ENCODE measurements at regions of chr3 and their contacts with region 1.

Region 1: DNA sequence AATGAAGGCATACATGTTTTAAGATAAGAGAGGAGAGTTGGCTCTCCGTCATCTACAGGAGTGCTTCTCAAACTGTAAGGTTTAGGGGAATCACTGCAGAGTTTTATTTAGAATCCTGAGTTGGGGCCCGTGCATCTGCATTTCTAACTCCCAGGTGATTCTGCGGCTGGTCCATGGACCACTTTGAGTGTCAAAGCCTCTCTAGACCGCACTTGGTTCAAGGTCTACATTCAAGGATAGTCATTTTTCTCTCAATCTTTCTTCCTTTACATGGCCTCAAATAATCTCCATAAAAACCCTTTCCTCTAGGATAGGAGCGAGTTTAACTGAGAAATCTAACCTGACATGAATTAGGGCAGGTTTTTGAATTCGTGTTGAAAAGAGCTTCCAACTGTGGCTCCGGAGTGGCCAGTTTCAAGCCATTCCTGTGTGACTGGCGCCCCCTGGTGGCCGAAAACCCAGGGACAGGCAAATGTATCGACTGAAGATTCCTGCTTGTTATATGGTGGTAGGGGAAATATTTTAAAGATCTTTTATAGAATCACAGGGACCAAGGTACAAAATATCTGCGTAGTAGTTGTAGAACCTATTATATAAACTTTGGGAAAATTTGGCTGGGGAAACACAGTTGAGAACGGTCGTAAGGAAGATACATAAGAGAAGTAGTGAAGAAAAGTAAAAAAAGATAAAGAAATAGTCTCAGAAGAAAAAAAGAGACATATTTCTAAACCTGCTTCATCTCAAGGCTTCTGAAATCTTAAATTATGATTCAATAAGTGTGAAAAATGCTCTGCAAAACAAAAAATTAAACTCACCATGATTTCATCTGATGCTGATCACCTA is 11.9 kb downstream of the GABRR3 start:
- DNase-seq: peak; percentile 88 to 99 (median 92)
- H3K4me3 ChIP-seq: peak overlapping the region in 1 of 59 donors; percentile 7
- H3K27ac ChIP-seq: no peak overlapping the region
- H3K27me3 ChIP-seq: peaks cover 0 to 4% (median 0%) of the 10 kb centered on the region in 45 donors
- CTCF ChIP-seq: peak in 55 of 56 donors; percentile 95 to 100 (median 99)

Region 2: DNA sequence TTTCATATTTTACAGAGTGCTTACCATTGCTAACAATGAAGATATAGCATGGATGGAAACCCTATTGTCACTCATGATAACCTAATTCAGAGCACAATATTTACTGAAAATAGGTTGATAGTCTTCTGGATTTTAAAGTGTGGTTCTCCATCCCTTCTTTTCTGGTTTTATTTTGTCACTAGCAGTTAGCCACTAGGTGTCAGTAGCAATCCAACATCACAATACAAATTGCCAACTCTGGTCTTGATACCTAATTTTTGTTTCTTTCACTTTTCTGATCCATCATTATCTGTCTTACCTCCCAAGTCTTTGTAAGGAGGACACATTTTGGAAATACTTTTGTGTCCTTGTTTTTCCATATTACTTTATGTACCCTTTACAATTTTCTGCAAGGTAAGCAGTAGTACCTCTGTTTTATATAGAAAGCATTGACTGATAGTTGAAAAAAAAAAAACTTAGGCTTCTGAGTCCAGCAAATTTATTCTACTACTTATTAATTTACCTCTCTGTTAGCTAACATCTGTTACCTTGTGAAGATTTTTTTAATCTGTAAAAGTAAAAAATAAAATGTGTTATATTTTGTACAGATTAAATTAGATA is 229.7 kb before region 1 on chr3:
- intact Hi-C with region 1: loop called (anchors 1 to 2 kb)
- DNase-seq: no peak
- H3K4me3 ChIP-seq: no peak overlapping the region
- H3K27ac ChIP-seq: no peak overlapping the region
- H3K27me3 ChIP-seq: no peaks in the 10 kb centered on the region
- CTCF ChIP-seq: peak; percentile 74 to 99 (median 86)

Region 3: GRCh38 chr3:97971677-97972567 is 51.3 kb before region 1 on chr3 and contains the start of gene RIOX2:
- intact Hi-C with region 1: loop called in 1 of 2 experiments (anchors 2 kb)
- DNase-seq: peak; percentile 56 to 83 (median 74)
- H3K4me3 ChIP-seq: peak within 1 kb of the TSS; percentile 62 to 85 (median 75)
- H3K27ac ChIP-seq: peak within 1 kb of the TSS in 56 of 59 donors; percentile 12 to 91 (median 78)
- H3K27me3 ChIP-seq: no peaks in the 10 kb centered on the region
- CTCF ChIP-seq: peak in 17 of 56 donors; percentile 2 to 35 (median 22)
- total RNA-seq, gene RIOX2: 17.8 to 37.3 (median 27.6) TPM